ENCODE measurements at regions of chr3 and their contacts with region 1.

Region 1: GRCh38 chr3:30042274-30042859 is 564.0 kb upstream of the TGFBR2 start:
- DNase-seq: peak in 1 of 2 donors; percentile 46
- H3K4me3 ChIP-seq: no peak overlapping the region
- CTCF ChIP-seq: peak in 1 of 3 donors; percentile 48
- POLR2A ChIP-seq: no peak

Region 2: DNA sequence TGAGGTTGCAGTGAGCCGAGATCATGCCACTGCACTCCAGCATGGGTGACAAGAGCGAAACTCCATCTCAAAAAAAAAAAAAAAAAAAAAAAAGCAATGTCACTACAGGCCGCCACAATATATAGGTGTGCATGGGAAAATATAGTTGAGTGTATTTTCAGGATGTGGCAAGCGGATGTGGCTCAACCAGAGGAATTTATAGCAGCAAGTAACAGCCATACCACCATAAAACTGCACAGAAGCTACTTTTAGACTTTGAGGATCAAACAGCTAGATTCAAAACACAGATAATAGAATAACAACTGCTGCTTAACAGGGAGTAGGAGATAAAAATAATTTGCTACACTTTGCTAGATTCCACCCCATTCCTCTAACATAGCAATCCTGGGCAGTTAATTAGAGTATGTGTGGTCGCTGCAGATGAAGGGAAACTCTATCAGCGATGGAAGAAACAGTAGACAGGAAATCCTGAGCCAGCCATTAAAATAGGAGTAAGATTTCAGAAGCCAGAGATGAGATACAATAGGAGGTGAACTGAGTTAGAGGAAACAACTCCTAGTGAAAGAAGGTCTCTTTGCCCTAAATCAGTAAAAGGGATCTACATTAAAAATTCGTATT is 1171.6 kb after region 1 on chr3:
- intact Hi-C with region 1: loop called (anchors 5 kb)
- DNase-seq: no peak
- H3K4me3 ChIP-seq: no peak overlapping the region
- CTCF ChIP-seq: no peak
- POLR2A ChIP-seq: no peak